CD8-positive, alpha-beta T cell (primary cell): ENCODE measurements at regions of chr15 and their contacts with region 1.

Region 1: DNA sequence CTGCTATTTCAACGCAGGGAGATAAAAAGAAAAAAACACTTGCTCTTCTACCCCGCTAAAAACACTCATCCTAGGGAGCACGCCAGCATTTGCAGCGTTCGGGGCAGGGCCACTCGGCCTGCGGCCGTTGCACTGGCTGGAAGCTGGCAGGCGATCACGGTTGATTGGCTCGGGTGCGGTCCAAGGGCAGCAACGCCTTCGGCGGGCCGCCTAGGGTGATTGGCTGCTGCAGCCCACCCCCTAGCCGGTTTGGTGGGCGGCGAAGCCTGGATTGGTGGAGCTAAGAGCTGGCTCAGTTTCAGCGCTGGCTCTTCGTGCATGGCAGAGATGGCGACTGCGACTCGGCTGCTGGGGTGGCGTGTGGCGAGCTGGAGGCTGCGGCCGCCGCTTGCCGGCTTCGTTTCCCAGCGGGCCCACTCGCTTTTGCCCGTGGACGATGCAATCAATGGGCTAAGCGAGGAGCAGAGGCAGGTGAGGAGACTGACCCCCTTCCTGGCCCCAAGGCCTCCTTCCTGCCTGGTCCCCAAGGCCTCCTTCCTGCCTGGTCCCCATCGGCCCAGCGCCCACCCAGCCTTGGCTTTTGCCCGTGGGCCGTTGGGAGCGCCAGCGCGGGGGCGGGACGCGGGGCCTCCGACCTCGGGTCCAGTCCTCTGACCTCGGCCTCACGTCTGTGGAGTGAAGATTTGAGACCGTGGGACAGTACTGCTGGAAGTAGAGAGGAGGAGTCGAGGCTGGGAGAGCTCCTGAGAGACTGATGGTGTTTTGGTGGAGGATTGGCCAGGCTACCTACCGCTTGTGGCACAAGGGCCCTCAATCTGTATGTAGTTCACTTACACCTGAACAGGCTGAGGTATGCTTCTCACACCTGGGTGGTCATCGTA is at the start of gene IVD:
- DNase-seq: peak; percentile 79 to 95 (median 91)
- ATAC-seq: peak; percentile 99
- H3K4me3 ChIP-seq: peak within 1 kb of the TSS; percentile 81 to 85
- H3K4me3 Mint-ChIP-seq: peak within 1 kb of the TSS; percentile 81
- H3K27ac ChIP-seq: peak within 1 kb of the TSS; percentile 67 to 69
- H3K27ac Mint-ChIP-seq: peak within 1 kb of the TSS; percentile 74
- H3K4me1 ChIP-seq: peaks cover 21% of the 10 kb centered on the region
- H3K4me1 Mint-ChIP-seq: peaks cover 37% of the 10 kb centered on the region
- H3K27me3 ChIP-seq: no peaks in the 10 kb centered on the region
- H3K27me3 Mint-ChIP-seq: no peaks in the 10 kb centered on the region
- CTCF ChIP-seq: no peak
- total RNA-seq, gene IVD: 46.6 to 54.9 TPM

Region 2: DNA sequence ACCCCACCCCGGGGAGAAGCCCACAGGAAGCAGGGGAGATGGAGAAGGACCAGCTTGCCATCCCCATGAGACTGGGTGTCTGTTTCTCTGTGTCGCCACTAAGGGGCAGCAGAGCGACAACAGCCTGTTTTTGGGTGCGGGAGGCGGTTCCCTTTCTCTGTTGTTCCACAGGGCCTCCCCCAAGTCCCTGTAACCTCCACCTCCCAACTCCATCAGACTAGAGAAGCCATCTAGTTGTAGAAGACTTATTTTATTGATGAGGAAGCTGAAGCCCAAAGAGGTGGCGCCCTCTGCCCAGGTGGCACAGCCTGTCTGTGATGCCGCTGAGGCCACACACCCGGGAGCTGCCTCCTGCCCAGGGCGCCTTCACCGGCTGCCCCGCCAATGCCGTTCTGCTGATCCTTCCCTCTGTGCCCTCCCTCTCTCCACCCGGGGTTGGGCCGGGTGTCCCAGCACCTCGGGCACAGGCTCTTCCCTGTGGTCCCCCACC is 61.1 kb before region 1 on chr15:
- CTCF ChIA-PET with region 1: interaction called, 27 read pairs
- POLR2A ChIA-PET with region 1: interaction called, 6 read pairs
- intact Hi-C with region 1: no loop called
- DNase-seq: peak; percentile 41 to 81 (median 69)
- ATAC-seq: peak; percentile 98
- H3K4me3 ChIP-seq: no peak overlapping the region
- H3K4me3 Mint-ChIP-seq: no peak overlapping the region
- H3K27ac ChIP-seq: no peak overlapping the region
- H3K27ac Mint-ChIP-seq: no peak overlapping the region
- H3K4me1 ChIP-seq: no peaks in the 10 kb centered on the region
- H3K4me1 Mint-ChIP-seq: no peaks in the 10 kb centered on the region
- H3K27me3 ChIP-seq: no peaks in the 10 kb centered on the region
- H3K27me3 Mint-ChIP-seq: no peaks in the 10 kb centered on the region
- CTCF ChIP-seq: peak; percentile 75

Region 3: DNA sequence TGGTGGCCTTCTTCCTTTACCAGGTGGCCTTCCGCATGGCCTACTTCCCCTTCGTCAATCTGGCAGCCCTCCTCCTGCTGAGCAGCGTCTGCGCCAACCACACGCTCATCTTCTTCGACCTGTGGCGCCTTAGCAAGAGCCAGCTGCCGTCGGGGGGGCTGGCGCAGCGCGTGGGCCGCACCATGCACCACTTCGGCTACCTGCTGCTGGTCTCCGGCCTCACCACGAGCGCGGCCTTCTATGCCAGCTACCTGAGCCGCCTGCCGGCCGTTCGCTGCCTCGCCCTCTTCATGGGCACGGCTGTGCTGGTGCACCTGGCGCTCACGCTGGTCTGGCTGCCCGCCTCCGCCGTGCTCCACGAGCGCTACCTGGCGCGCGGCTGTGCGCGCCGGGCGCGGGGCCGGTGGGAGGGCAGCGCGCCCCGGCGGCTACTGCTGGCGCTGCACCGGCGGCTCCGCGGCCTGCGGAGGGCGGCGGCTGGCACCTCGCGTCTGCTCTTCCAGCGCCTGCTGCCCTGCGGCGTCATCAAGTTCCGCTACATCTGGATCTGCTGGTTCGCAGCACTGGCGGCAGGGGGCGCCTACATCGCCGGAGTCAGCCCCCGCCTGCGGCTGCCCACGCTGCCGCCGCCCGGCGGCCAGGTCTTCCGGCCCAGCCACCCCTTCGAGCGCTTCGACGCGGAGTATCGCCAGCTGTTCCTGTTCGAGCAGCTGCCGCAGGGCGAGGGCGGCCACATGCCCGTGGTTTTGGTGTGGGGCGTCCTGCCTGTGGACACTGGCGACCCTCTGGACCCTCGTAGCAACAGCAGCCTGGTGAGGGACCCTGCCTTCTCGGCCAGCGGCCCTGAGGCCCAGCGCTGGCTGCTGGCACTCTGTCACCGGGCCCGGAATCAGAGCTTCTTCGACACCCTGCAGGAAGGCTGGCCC is 37.8 kb before region 1 on chr15:
- CTCF ChIA-PET with region 1: interaction called, 20 read pairs
- POLR2A ChIA-PET with region 1: interaction called, 19 read pairs
- intact Hi-C with region 1: loop called in 1 of 2 experiments (anchors 1 kb)
- DNase-seq: peak; percentile 74 to 96 (median 85)
- ATAC-seq: peak; percentile 95
- H3K4me3 ChIP-seq: peak overlapping the region; percentile 58 to 75
- H3K4me3 Mint-ChIP-seq: peak overlapping the region; percentile 83
- H3K27ac ChIP-seq: peak overlapping the region; percentile 17 to 62
- H3K27ac Mint-ChIP-seq: peak overlapping the region; percentile 84
- H3K4me1 ChIP-seq: peaks cover 23% of the 10 kb centered on the region
- H3K4me1 Mint-ChIP-seq: peaks cover 19% of the 10 kb centered on the region
- H3K27me3 ChIP-seq: no peaks in the 10 kb centered on the region
- H3K27me3 Mint-ChIP-seq: no peaks in the 10 kb centered on the region
- CTCF ChIP-seq: peak; percentile 92

Region 4: DNA sequence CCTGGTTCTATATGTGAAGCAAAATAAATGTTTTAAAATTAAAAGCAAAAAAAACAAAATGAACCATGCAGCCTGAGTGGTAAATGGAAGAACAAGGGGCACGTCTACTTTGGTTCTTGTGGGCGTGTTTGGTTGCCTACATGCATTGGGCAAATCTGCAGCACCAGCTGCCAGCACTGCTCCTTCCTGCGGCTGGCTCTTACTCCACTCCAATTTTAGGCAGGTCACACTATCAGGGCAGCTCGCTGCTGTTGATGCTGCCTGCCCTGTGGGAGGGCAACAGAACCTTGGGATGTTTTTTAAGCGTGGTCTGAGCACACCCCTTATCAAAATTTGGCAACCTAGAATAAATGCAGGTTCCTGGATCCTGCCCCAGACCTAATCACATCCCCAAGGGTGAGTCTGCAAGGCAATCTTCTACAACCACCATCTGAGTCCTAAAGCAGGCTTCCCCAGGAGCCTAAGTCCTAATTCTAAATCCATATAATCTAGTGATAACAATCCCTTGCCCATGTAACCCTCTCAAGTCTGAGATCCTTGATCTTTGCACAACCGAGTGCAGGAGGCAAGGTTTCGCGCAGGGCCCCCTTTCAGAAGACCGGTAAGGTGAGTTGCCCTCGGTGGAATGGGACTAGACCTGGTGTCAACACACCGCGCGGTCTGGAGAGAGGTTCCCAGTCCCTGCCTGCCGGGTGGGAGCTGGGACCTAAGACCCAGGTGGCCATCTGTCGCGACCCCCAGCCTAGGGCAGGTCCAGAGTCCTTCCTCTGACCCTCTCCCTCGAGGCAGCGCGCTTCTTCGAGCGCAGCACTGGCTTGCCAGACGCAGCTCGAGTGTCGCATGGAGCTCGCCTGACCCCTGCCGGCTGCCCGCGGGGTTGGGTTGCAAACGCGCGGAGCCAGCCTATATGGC is 15.8 kb after region 1 on chr15:
- CTCF ChIA-PET with region 1: interaction called, 27 read pairs
- POLR2A ChIA-PET with region 1: no interaction called
- intact Hi-C with region 1: no loop called
- DNase-seq: peak; percentile 65 to 89 (median 80)
- ATAC-seq: peak; percentile 99
- H3K4me3 ChIP-seq: no peak overlapping the region
- H3K4me3 Mint-ChIP-seq: no peak overlapping the region
- H3K27ac ChIP-seq: no peak overlapping the region
- H3K27ac Mint-ChIP-seq: no peak overlapping the region
- H3K4me1 ChIP-seq: peaks cover 6% of the 10 kb centered on the region
- H3K4me1 Mint-ChIP-seq: no peaks in the 10 kb centered on the region
- H3K27me3 ChIP-seq: no peaks in the 10 kb centered on the region
- H3K27me3 Mint-ChIP-seq: no peaks in the 10 kb centered on the region
- CTCF ChIP-seq: peak; percentile 80

Region 5: DNA sequence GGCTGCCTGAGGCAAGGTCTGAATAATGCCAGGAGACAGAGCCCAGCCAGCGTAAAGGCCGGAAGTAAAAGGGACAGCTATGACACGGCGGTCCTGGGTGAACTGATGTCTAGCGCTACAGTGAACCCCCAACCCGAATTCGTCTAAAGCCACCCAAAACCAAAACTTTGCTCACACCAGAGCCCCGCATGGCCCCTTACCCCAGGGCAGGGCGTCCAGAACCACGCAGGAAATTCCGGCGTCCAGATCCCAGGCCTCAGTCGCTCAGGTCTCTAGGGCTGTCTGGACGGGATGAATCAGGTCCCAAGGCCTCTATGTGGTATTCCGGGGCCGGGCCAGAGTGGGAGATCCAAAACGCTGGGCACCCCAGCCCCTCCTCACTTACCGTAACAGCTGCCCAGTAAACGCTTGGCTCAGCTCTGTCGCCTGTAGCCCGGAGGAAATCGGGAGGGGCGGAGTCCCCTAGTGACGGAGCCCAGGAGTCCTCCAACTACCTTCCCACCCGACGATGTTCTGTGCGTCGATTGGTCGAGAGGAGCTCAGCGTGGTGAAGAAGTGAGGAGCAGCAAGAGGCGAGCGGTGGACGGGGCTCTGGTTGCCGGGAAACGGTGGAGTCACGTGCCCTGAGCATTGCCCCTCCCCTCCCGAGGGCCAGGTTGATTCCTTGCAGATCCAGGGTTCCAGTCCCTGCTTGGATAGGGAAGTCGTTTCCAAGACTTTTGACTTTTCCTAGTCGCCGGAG is 159.0 kb after region 1 on chr15 and contains the start of gene CCDC32:
- CTCF ChIA-PET with region 1: no interaction called
- POLR2A ChIA-PET with region 1: no interaction called
- intact Hi-C with region 1: loop called in 1 of 2 experiments (anchors 10 kb)
- DNase-seq: peak; percentile 84 to 99 (median 94)
- ATAC-seq: peak; percentile 90
- H3K4me3 ChIP-seq: peak within 1 kb of the TSS; percentile 89 to 97
- H3K4me3 Mint-ChIP-seq: peak within 1 kb of the TSS; percentile 95
- H3K27ac ChIP-seq: peak within 1 kb of the TSS; percentile 87 to 97
- H3K27ac Mint-ChIP-seq: peak within 1 kb of the TSS; percentile 97
- H3K4me1 ChIP-seq: peaks cover 11% of the 10 kb centered on the region
- H3K4me1 Mint-ChIP-seq: peaks cover 52% of the 10 kb centered on the region
- H3K27me3 ChIP-seq: no peaks in the 10 kb centered on the region
- H3K27me3 Mint-ChIP-seq: no peaks in the 10 kb centered on the region
- CTCF ChIP-seq: no peak
- total RNA-seq, gene CCDC32: 18.3 to 20.3 TPM